ACHN (cell line): ENCODE measurements at regions of chr17 and their contacts with region 1.

Region 1: GRCh38 chr17:82338858-82339633 is 5.5 kb upstream of the SECTM1 start:
- DNase-seq: peak; percentile 79

Region 2: DNA sequence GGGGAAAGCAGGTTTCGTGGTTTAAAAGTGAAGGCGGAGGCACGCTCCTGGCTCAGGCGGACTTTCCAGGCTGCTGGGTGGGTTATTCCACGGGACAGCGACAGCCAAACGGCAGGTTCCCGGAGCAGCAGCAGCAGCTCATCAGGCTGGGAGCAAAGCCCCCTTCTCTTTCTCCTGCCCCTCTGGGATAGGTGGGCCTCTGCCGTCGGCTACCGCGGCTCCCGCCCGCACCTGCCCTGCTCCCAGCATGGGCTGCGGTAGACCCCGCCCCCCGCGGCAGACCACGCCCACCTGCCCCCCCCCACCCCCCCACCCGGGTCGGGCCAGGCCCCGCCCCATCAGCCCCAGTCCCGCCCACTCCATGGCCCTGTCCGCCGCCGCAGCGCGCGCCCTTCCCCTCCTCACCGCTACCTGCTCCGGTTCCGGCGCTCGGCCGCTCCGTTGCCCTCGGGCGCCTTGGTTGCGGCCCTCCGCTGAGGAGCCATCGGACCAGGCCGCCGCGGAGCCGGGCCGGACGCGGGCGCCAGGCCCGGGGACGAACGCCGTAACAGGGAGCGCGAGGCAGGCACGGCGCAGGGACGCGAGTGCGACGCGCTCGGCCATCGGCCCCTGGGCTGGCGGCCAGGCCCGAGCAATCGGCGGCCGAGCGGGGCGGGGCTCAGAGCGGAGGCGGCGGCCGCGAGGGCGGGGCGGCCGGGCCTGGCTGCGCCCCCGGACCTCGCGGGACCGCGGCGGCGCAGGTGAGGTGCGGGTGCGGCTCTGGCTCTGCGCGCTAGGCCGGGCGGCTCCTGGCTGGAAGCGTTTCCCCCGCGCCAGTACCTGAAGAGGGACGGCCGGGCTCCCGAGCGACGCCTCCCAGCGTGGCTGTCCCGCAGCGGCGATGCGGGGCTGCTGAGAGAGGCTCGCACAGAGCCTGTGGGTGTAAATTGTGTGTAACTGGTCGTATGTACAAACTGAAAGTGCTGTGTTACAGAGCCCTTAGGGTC is 79.2 kb after region 1 on chr17 and contains the starts of genes HEXD and OGFOD3:
- in situ Hi-C with region 1: loop called (anchors 5 kb)
- DNase-seq: peak; percentile 89